ENCODE measurements at regions of chr3 and their contacts with region 1.

Region 1: DNA sequence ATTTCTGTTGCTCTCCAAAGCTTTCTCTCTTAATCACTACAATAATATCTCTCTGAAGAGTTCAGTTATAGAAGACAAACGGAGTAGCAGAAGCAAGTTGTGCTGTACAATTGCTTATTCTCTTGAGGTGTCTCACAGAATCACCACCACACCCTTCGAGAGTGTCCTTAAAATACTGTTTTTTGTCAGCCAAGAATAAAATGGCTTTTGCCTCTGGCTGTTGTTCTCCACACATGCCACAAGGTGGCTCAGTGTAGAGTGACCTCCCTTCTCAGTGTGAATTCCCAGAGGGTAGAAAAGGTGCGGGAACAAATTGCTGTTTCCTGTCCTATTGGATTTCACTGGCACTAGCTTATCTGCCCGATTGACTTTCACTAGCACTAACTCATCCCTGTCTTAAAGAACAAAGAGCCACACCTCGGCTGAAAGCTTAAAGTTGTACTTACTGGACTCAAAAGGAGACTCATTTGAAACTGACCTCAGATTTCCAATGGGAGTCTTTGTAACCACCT is 134.2 kb upstream of the SATB1 start:
- DNase-seq: peak; percentile 44
- ATAC-seq: peak; percentile 28
- H3K4me3 Mint-ChIP-seq: no peak overlapping the region
- H3K27ac Mint-ChIP-seq: peak overlapping the region; percentile 73
- H3K4me1 Mint-ChIP-seq: peaks cover 52% of the 10 kb centered on the region
- H3K27me3 Mint-ChIP-seq: no peaks in the 10 kb centered on the region

Region 2: GRCh38 chr3:18351823-18352744 is 207.3 kb before region 1 on chr3:
- CTCF ChIA-PET with region 1: no interaction called
- POLR2A ChIA-PET with region 1: no interaction called
- DNase-seq: no peak
- ATAC-seq: no peak
- H3K4me3 Mint-ChIP-seq: no peak overlapping the region
- H3K27ac Mint-ChIP-seq: no peak overlapping the region
- H3K4me1 Mint-ChIP-seq: peaks cover 7% of the 10 kb centered on the region
- H3K27me3 Mint-ChIP-seq: no peaks in the 10 kb centered on the region

Region 3: GRCh38 chr3:18481946-18482548 is 77.3 kb before region 1 on chr3:
- CTCF ChIA-PET with region 1: no interaction called
- POLR2A ChIA-PET with region 1: no interaction called
- DNase-seq: no peak
- ATAC-seq: no peak
- H3K4me3 Mint-ChIP-seq: no peak overlapping the region
- H3K27ac Mint-ChIP-seq: no peak overlapping the region
- H3K4me1 Mint-ChIP-seq: peaks cover 14% of the 10 kb centered on the region
- H3K27me3 Mint-ChIP-seq: no peaks in the 10 kb centered on the region

Region 4: GRCh38 chr3:18575573-18575972 is 16.2 kb after region 1 on chr3:
- CTCF ChIA-PET with region 1: interaction called, 27 read pairs
- POLR2A ChIA-PET with region 1: no interaction called
- DNase-seq: no peak
- ATAC-seq: no peak
- H3K4me3 Mint-ChIP-seq: no peak overlapping the region
- H3K27ac Mint-ChIP-seq: no peak overlapping the region
- H3K4me1 Mint-ChIP-seq: no peaks in the 10 kb centered on the region
- H3K27me3 Mint-ChIP-seq: no peaks in the 10 kb centered on the region

Region 5: DNA sequence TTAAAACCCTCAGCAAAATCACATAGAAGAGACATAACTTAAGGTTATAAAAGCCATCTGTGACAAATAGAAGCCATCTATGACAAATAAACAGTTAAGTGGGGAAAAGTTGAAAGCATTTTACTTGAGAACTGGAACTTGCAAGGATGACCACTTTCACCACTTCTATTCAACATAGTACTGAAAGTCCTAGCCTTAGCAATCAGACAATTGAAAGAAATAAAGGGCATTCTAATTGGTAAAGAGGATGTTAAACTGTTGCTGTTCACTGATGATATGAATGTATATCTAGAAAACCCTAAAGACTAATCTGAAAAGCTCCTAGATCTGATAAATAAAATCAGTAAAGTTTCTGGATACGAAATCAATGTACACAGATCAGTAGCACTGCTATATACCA is 52.6 kb after region 1 on chr3:
- CTCF ChIA-PET with region 1: no interaction called
- POLR2A ChIA-PET with region 1: no interaction called
- DNase-seq: no peak
- ATAC-seq: no peak
- H3K4me3 Mint-ChIP-seq: no peak overlapping the region
- H3K27ac Mint-ChIP-seq: no peak overlapping the region
- H3K4me1 Mint-ChIP-seq: no peaks in the 10 kb centered on the region
- H3K27me3 Mint-ChIP-seq: no peaks in the 10 kb centered on the region

Region 6: DNA sequence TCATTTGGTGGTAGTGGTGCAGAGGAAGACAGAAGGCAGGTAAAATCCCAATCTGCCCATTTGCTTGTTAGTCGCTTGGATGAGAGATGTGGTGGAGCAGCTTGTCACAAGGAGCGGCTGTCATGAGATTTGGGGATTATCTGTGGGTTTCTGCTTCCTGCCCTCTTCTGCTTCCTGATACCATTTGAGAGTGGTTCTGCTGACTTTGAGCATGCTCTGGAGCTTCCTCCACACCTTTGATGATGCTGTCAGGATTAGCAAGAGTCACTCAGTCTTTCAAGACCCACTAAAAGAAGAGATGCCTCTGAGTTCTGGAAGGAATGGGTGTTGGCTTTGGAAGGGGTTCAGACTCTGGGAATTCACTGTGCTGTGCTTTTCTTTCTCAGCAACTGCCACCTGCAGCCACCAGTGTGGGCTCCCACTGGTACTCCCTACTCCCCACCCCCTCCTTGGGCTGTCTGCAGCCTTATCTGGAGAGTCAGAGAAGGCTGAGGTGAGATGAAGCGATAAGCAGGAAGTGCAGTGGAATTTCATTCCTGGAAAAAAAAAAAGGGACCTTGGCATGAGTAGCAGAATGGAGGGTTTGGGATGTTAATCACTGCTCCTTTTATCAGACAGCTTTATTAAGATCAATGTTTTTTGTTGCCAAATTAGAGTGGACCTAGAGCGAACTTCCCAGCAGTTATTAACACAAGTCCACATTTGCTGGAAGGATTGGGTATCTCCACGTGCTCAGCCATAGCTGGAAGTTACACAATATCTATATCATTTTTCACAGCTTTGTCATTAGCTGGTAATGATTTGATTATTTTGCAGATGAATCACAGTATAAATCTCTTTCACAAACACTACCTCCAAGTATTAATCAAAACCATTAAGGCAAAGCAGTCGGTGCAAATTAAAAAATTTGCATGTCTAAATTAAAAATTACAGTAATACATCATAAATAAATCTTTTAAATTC is 98.8 kb after region 1 on chr3:
- CTCF ChIA-PET with region 1: interaction called, 15 read pairs
- POLR2A ChIA-PET with region 1: no interaction called
- DNase-seq: peak; percentile 51
- ATAC-seq: peak; percentile 64
- H3K4me3 Mint-ChIP-seq: peak overlapping the region; percentile 10
- H3K27ac Mint-ChIP-seq: peak overlapping the region; percentile 68
- H3K4me1 Mint-ChIP-seq: peaks cover 43% of the 10 kb centered on the region
- H3K27me3 Mint-ChIP-seq: no peaks in the 10 kb centered on the region

Region 7: GRCh38 chr3:18703798-18704197 is 144.4 kb after region 1 on chr3:
- CTCF ChIA-PET with region 1: interaction called, 58 read pairs
- POLR2A ChIA-PET with region 1: no interaction called
- DNase-seq: no peak
- ATAC-seq: no peak
- H3K4me3 Mint-ChIP-seq: no peak overlapping the region
- H3K27ac Mint-ChIP-seq: peak overlapping the region; percentile 41
- H3K4me1 Mint-ChIP-seq: peaks cover 12% of the 10 kb centered on the region
- H3K27me3 Mint-ChIP-seq: no peaks in the 10 kb centered on the region

Region 8: DNA sequence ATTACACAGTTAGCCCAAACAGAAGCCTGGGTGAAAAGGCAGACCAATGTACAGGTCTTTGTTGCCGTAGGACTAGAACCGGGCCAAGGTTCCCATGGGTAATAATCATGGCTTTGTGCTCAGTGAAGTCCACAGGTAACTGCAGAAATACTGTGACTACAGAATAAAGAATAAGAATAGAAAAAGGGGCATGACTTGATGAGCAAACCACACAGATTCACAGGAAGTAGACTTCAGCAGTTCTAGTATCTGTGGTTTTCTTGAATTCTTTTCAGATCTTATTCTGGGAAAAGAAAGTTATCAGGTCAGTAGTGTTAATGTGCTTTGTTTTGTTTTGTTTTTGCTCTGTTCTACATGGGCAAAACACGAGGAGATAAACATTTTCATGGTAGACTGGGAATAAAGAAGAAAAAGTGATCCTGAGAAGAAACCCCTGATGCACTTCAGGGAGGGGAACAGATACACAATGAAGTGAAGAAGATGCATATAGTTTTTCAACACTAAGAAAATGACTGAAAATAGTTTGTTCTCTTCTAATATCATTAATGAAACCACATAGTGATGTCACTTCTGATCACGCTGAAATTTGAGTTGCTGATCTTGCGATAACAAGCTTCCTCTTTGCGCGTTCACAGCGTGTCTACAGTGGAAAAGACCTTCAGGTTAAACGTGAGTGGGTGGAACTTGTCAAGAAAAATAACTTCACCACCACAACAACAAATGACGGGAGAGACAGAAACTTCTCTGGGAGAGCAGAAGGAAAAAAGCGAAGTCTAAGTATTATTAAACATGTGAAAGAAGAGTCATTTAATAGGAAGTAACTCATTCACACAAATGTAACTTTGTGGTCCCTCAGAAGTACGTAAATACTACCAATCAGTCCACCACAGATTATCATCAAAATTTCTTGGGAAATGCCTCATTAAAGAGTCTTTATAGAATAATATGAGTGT is 181.5 kb after region 1 on chr3:
- CTCF ChIA-PET with region 1: interaction called, 12 read pairs
- POLR2A ChIA-PET with region 1: no interaction called
- DNase-seq: peak; percentile 72
- ATAC-seq: peak; percentile 72
- H3K4me3 Mint-ChIP-seq: peak overlapping the region; percentile 76
- H3K27ac Mint-ChIP-seq: peak overlapping the region; percentile 92
- H3K4me1 Mint-ChIP-seq: peaks cover 87% of the 10 kb centered on the region
- H3K27me3 Mint-ChIP-seq: no peaks in the 10 kb centered on the region

Measured in activated CD8-positive, alpha-beta T cell treated with anti-CD3 and anti-CD28 coated beads, Interleukin-2, amount 10 ng/mL, durations not matched to agents 7 days and 5 days (primary cell).